A549 (cell line): ENCODE measurements at regions of chr10 and their contacts with region 1.

Region 1: DNA sequence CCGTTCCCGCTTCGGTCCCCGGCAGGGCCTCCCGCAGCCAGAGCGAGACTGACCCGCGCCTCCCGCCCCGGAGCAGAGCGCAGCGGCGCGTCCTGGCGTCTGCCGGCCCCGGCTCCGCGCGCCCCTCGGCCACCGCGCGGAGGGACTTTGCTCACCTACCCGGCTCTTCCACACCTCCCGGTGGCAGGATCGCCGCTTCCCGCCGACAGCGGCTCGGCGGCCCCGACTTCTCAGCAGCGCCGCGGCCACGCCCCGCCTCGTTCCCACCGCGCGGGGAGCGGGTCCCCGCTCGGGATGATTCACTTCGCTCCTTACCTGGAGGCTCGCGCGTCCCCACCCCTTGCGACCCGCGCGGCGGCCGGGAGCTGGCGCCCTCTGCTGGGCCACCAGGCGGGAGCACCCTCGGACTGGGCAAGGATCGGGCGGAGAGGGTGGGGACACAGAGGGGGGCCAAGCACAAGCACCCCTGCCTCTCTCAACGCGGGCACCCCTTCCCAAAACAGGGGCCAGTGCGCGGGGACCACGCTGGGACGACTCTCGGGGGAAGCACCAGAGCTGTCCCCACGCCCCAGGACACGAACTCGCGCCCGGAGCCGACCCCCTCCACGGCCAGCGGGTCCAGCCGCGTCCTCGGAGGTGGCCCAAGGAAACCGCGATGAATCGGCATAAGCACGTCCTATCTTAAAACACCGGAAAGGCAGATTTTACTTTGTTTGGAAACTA is 101.0 kb upstream of the SVIL start:
- DNase-seq: peak; percentile 89 to 95
- ATAC-seq: peak; percentile 80 to 94
- H3K4me3 ChIP-seq: peak overlapping the region; percentile 89
- H3K27ac ChIP-seq: peak overlapping the region; percentile 91 to 97
- H3K4me1 ChIP-seq: peaks cover 12% of the 10 kb centered on the region; the same call in 2 of the 3 replicates
- CTCF ChIP-seq: peak; percentile 89
- EP300 ChIP-seq: no peak
- POLR2A ChIP-seq: no peak; the same call in 1 of the 2 replicates
- RAD21 ChIP-seq: peak; percentile 76 to 92

Region 2: GRCh38 chr10:29621161-29621560 is 114.6 kb before region 1 on chr10:
- CTCF ChIA-PET with region 1: interaction called, 14 read pairs
- POLR2A ChIA-PET with region 1: no interaction called
- DNase-seq: peak in 1 of 2 experiments; percentile 15
- ATAC-seq: 0 out of 6 replicates have a peak, but pooled peaks of 1 of the 2 experiments have one; percentile 15
- H3K4me3 ChIP-seq: no peak overlapping the region
- H3K27ac ChIP-seq: peak overlapping the region in 1 of 2 experiments; percentile 58; a peak in 3 of 6 replicates
- H3K4me1 ChIP-seq: peaks cover 40% of the 10 kb centered on the region
- CTCF ChIP-seq: no peak
- EP300 ChIP-seq: no peak
- POLR2A ChIP-seq: no peak
- RAD21 ChIP-seq: no peak

Region 3: DNA sequence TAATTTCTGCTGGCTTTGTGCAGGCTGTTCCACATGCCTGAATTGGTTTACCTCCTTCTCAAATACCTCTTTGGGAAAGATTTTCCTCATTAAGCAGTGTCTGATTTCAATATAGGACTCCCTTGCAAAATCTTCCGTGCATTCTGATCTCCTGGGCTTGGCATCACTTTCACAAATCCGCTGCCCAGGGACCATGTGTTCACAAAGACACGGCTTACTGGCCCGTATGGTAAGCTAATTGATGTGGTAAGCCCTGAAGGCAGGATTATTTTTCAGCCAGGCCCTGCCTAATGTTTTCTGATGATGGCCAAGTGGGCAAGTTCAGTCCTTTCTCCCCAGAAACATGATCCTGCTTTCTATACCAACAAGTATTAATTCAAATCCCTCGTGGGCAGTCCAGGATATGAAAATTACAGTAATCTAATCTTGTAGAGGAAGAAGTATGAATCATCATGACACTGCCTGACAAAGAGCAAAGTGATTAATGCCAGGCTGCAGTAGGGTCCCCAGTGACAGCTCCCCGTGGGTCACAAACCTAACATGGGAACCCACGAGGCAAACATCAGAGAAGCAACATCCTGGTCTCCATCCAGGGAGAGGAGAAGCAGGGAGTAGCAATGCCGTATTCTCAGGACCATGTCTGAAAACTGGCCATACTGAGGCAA is 89.4 kb before region 1 on chr10:
- CTCF ChIA-PET with region 1: no interaction called
- POLR2A ChIA-PET with region 1: no interaction called
- DNase-seq: no peak
- ATAC-seq: peak; percentile 27; a peak in 3 of 6 replicates
- H3K4me3 ChIP-seq: no peak overlapping the region
- H3K27ac ChIP-seq: peak overlapping the region in 1 of 2 experiments; percentile 22; a peak in 3 of 6 replicates
- H3K4me1 ChIP-seq: peaks cover 40% of the 10 kb centered on the region
- CTCF ChIP-seq: no peak
- EP300 ChIP-seq: no peak
- POLR2A ChIP-seq: no peak
- RAD21 ChIP-seq: no peak

Region 4: DNA sequence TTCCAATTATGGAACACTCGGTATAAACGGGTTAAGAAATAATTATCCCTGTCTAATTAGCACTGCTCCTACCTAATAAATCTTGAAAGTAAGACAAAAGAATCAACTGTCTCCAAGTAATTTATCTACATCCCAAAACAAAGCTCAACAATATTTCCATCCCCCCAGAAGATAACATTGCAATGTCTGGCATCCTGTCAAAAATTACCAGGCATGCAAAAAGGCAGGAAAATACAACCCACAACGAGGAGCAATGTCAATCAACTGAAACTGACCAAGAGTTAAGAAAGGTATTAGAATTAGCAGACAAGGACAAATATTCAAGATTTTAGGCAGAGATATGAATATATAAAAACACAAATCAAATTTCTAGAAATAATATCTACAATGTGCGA is 16.5 kb before region 1 on chr10:
- CTCF ChIA-PET with region 1: interaction called, 11 read pairs
- POLR2A ChIA-PET with region 1: interaction called, 5 read pairs
- DNase-seq: no peak
- ATAC-seq: no peak
- H3K4me3 ChIP-seq: no peak overlapping the region
- H3K27ac ChIP-seq: no peak overlapping the region
- H3K4me1 ChIP-seq: peaks cover 12% of the 10 kb centered on the region
- CTCF ChIP-seq: no peak
- EP300 ChIP-seq: no peak
- POLR2A ChIP-seq: no peak
- RAD21 ChIP-seq: no peak

Region 5: DNA sequence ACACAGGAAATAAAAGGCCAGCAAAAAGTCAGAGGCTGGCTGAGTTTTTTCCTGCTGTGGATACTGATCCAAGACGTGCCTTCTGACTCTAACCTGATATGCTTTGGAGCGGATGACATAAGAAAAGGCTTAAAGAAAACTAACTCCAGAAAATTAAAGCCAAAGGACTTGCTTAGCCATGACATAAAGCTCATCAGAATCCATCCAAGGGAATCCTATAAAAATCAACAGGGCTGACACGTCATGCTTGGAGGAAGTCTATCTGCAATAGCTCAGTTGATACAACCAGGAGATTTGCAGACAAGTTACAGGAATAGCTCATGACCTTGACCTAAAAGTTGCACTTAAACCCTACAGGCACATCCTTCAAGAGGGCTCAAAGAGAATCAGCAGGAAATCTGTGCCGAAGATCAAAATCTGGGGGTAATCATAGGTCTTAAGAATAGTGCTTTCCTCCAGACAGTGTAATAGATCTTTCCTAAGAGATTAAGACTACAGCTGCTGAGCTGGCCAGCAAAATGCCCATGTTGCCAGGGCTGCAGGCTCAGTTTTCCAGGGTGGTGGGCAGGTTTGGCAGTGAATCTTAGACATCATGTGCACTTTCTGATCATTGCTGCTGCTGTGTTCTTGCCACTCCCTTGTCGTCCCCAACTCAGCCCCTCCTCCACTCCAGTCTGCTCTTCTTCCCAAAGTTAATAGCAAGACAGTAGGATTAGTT is 10.5 kb after region 1 on chr10:
- CTCF ChIA-PET with region 1: interaction called, 11 read pairs
- POLR2A ChIA-PET with region 1: interaction called, 4 read pairs
- DNase-seq: no peak
- ATAC-seq: no peak
- H3K4me3 ChIP-seq: no peak overlapping the region
- H3K27ac ChIP-seq: no peak overlapping the region
- H3K4me1 ChIP-seq: no peaks in the 10 kb centered on the region
- CTCF ChIP-seq: no peak
- EP300 ChIP-seq: no peak
- POLR2A ChIP-seq: no peak
- RAD21 ChIP-seq: no peak

Region 6: GRCh38 chr10:29804025-29804852 is 68.5 kb after region 1 on chr10:
- CTCF ChIA-PET with region 1: interaction called, 17 read pairs
- POLR2A ChIA-PET with region 1: no interaction called
- DNase-seq: peak; percentile 82 to 85
- ATAC-seq: peak; percentile 80 to 83
- H3K4me3 ChIP-seq: peak overlapping the region; percentile 21; the same call in 1 of the 3 replicates
- H3K27ac ChIP-seq: peak overlapping the region; percentile 79 to 86
- H3K4me1 ChIP-seq: peaks cover 55% of the 10 kb centered on the region
- CTCF ChIP-seq: no peak
- EP300 ChIP-seq: peak; percentile 34 to 81; a peak in 3 of 5 replicates
- POLR2A ChIP-seq: no peak
- RAD21 ChIP-seq: no peak; a peak in 2 of 5 replicates

Region 7: GRCh38 chr10:29849126-29849833 is 113.5 kb after region 1 on chr10:
- CTCF ChIA-PET with region 1: interaction called, 14 read pairs
- POLR2A ChIA-PET with region 1: no interaction called
- DNase-seq: no peak
- ATAC-seq: no peak
- H3K4me3 ChIP-seq: no peak overlapping the region
- H3K27ac ChIP-seq: no peak overlapping the region
- H3K4me1 ChIP-seq: no peaks in the 10 kb centered on the region
- CTCF ChIP-seq: no peak
- EP300 ChIP-seq: no peak
- POLR2A ChIP-seq: no peak
- RAD21 ChIP-seq: no peak

Region 8: DNA sequence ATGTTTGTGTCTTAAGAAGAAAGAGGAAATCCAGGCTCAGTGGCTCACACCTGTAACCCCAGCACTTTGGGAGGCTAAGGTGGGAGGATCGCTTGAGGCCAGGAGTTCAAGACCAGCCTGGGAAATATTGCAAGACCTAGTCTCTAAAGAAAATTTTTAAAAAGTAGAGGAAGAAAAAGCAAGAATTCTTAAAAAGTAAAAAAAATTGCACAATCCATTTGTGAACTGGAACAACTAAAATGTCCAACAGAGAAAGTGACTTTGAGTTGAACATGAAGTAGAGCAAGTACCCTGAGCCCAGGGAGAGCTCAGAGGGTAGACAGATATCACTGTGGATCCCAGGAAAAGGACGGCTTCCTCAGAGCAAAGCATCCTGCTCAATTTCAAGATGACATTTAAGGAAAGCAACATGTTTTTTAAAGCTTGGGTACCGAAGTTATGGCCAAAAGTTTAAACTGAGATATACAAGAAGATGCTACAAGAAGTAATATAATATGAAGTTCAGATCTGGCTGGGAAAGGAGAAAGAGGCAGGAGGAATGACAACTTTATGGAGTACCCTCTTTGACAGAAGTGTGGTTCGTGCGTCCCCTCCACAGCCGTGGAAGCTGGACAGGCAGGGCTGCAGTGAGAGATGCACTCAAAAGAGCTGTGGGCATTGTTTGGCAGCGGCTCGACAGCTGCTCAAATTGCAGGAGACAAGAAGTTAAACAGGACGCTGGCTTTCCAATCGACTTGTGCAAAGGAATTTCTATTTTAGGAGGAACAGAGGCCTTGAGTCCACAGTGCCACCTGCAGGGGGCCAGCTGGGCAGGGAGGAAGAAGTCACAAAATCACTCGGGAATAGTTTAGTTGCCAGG is 122.3 kb after region 1 on chr10:
- CTCF ChIA-PET with region 1: interaction called, 18 read pairs
- POLR2A ChIA-PET with region 1: no interaction called
- DNase-seq: peak; percentile 70 to 75
- ATAC-seq: peak; percentile 94 to 96
- H3K4me3 ChIP-seq: no peak overlapping the region
- H3K27ac ChIP-seq: peak overlapping the region; percentile 45 to 75
- H3K4me1 ChIP-seq: peaks cover 19% of the 10 kb centered on the region; the same call in 2 of the 3 replicates
- CTCF ChIP-seq: peak; percentile 86
- EP300 ChIP-seq: no peak
- POLR2A ChIP-seq: no peak
- RAD21 ChIP-seq: peak; percentile 92 to 94